ENCODE measurements at regions of chr11 and their contacts with region 1.

Region 1: DNA sequence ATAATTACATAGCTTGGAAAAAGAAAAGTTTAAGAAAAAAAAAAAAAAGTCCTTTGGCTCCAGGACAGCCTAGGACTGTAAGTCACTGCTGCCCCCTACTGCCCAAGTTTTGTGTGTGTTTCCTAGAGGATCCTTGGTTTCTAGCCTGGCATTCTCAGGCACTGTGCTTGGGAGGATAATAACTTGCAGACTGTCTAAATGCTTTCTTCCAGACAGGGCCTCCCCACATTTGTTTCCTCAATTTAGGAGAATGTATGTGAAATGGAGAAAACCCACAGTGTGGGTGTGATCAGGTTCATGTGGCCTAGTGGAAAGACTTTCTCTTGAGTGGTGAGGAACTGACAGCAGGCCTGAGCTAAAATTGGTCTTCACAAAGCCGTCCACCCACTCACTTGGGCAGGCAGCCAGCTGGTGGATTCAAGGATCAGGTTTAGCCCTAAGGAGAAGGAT is 191.0 kb downstream of the NAV2 start:
- DNase-seq: no peak
- H3K4me3 ChIP-seq: no peak overlapping the region
- H3K27me3 ChIP-seq: no peaks in the 10 kb centered on the region
- CTCF ChIP-seq: peak; percentile 88

Region 2: GRCh38 chr11:19735157-19735908 is 168.3 kb before region 1 on chr11:
- CTCF ChIA-PET with region 1: interaction called, 12 read pairs
- POLR2A ChIA-PET with region 1: no interaction called
- DNase-seq: peak; percentile 36
- H3K4me3 ChIP-seq: no peak overlapping the region
- H3K27me3 ChIP-seq: no peaks in the 10 kb centered on the region
- CTCF ChIP-seq: peak; percentile 66

Region 3: GRCh38 chr11:19742588-19743292 is 160.9 kb before region 1 on chr11:
- CTCF ChIA-PET with region 1: interaction called, 17 read pairs
- POLR2A ChIA-PET with region 1: no interaction called
- DNase-seq: no peak
- H3K4me3 ChIP-seq: no peak overlapping the region
- H3K27me3 ChIP-seq: no peaks in the 10 kb centered on the region
- CTCF ChIP-seq: peak; percentile 84

Region 4: GRCh38 chr11:19890308-19890707 is 13.3 kb before region 1 on chr11:
- CTCF ChIA-PET with region 1: interaction called, 18 read pairs
- POLR2A ChIA-PET with region 1: no interaction called
- DNase-seq: peak; percentile 58
- H3K4me3 ChIP-seq: no peak overlapping the region
- H3K27me3 ChIP-seq: no peaks in the 10 kb centered on the region
- CTCF ChIP-seq: no peak

Region 5: DNA sequence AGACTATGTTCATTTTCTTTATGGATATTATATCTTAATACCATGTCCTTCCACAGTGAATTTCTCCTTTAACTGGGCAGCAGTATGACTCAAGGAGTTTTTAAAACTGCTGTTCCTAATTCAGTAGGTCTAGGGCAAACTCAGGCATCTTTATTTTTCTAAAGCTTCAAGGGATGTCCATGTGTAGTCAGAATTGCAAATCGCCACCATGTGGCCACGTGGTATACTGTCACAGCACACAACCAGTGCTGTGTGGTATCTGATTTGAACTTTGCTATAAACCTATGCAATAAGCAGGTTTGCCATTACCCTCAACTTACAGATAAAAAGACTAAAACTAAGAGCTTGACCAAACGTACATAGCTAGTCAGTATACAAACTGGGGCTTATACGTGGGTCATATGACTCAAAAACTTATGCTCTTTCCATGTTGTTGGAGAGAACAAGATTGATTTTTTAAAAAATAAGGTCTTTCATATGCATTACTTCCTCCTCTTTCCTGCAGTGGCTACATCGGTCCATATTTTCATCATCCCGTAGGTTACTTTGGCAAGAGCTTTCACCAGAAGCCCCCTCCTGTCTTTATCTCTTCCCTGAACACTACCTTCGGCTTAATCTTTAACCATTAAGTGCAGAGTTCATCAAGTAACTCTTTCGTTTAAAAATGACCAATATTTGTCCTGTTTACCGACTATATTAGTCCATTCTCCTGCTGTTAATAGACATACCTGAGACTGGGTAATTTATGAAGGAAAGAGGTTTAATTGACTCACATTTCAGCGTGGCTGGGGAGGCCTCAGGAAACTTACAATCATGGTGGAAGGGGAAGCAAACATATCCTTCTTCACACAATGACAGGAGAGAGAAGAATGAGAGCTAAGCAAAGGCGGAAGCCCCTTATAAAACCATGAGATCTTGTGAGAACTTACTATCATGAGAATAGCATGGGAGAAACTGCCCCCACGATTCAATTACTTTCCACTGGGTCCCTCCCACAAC is 451.9 kb after region 1 on chr11:
- CTCF ChIA-PET with region 1: interaction called, 10 read pairs
- POLR2A ChIA-PET with region 1: no interaction called
- DNase-seq: no peak
- H3K4me3 ChIP-seq: no peak overlapping the region
- H3K27me3 ChIP-seq: peaks cover 5% of the 10 kb centered on the region
- CTCF ChIP-seq: peak; percentile 78

Measured in BJ (cell line).